ENCODE measurements at regions of chrX and their contacts with region 1.

Region 1: DNA sequence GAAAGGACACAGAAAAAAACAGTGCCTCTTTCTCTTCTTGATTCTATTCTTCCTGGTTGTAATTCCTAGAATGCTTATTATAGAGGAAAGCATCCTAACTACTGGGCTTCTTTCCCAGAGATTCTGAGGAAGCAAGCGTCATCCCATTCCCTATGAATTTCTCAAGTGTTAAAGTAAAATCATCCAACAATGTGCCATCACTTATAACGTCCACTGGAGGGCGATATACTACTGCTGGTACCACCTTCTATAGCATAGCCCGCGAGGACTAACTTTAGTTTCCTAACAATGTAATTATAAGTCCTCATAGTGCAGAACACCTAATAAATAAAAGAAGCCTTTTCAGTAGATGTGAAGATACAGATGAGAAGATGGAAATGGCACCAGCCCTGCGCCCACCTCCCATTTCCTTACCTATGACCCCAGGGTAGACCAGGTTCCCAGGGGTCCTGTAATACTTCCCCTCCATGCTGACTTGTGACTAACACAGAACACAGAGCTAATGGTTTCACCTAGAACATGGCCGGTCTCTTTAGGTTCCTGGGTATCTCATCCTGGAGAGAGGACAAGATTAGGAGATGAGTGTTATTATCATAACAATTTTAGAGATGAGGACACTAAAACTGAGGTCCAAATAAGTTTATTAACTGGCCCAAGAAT is 4.2 kb downstream of the CENPVL3 start:
- DNase-seq: no peak
- ATAC-seq: peak; percentile 66
- H3K4me3 ChIP-seq: no peak overlapping the region
- H3K27ac ChIP-seq: no peak overlapping the region
- H3K4me1 ChIP-seq: no peaks in the 10 kb centered on the region
- H3K27me3 ChIP-seq: no peaks in the 10 kb centered on the region
- CTCF ChIP-seq: peak; percentile 47 to 60 (median 60); a peak in 5 of 6 replicates
- EP300 ChIP-seq: no peak
- POLR2A ChIP-seq: no peak
- RAD21 ChIP-seq: peak; percentile 79

Region 2: DNA sequence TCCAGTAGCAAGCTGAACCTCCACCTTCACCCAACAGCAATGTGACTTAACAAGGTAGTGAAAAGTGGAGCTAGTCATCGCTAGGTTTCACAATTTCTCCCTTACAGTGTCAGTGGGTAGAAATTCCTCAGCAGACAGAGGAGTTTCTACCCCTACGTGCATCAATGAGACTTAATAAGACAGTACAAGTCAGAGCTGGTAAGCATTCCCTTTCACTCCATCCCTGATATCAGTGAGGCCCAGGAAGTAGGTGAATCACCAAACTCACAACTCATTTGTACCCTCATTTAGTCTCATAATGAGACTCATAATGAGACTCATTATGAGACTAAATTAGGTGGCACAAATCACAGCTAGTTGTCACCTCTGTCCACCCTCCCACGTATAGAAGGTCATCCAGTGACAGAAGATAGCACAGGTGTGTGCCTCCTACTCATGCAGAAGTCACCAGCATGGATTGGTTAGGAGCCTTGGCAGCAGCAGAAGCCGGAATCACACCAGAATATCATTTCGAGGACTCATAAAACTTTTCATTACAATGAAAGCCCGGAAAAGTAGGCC is 332.6 kb before region 1 on chrX:
- CTCF ChIA-PET with region 1: no interaction called
- POLR2A ChIA-PET with region 1: no interaction called
- RAD21 ChIA-PET with region 1: no interaction called
- SMC1A ChIA-PET with region 1: no interaction called
- in situ Hi-C with region 1: no loop called
- intact Hi-C with region 1: no loop called
- DNase-seq: no peak
- ATAC-seq: no peak
- H3K4me3 ChIP-seq: no peak overlapping the region
- H3K27ac ChIP-seq: no peak overlapping the region
- H3K4me1 ChIP-seq: no peaks in the 10 kb centered on the region
- H3K27me3 ChIP-seq: no peaks in the 10 kb centered on the region
- CTCF ChIP-seq: no peak
- EP300 ChIP-seq: no peak
- POLR2A ChIP-seq: no peak
- RAD21 ChIP-seq: no peak

Region 3: DNA sequence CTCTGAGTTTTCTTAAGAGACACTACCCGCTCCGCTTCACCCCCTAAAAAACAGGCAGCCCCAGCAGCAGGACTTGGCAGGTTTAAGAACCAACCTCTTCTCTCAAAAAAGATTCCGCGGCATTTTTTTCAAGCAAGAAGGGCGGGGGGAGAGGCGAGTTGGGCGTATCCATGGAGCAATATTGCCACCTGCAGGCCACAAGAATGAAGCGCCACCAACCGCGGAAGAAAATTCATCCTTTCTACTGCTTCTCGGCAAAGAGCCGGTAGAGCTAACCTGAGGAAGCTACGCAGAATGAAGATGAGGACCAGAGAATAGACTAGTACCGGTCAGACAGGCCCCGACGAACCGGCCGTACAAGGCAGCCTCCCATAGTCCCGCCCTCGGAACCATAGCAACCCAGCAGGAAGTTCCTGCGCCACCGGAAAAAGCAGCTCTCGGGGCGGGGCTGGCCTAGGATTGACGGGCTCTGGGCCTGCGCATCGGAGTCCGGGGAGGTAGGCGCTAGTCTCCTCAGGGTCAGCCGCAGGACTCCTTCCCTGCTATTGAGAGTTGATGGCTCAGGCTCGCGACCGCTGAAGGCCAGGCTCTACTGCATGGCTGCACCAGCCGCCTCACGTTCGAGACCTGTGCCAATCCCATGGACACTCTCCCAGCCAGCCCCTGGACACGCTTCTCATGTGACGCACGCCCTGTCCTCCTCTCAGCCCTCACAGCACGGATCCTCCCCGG is 647.1 kb after region 1 on chrX:
- CTCF ChIA-PET with region 1: interaction called, 3 read pairs
- POLR2A ChIA-PET with region 1: no interaction called
- RAD21 ChIA-PET with region 1: interaction called, 4 read pairs
- SMC1A ChIA-PET with region 1: no interaction called
- in situ Hi-C with region 1: loop called (anchors 10 kb)
- intact Hi-C with region 1: loop called (anchors 1 kb)
- DNase-seq: peak; percentile 64
- ATAC-seq: peak; percentile 100
- H3K4me3 ChIP-seq: peak overlapping the region; percentile 68
- H3K27ac ChIP-seq: peak overlapping the region; percentile 79
- H3K4me1 ChIP-seq: no peaks in the 10 kb centered on the region; the same call in none of the 2 replicates
- H3K27me3 ChIP-seq: no peaks in the 10 kb centered on the region
- CTCF ChIP-seq: peak; percentile 80 to 96 (median 93); a peak in 5 of 6 replicates
- EP300 ChIP-seq: peak in 1 of 2 experiments; percentile 32; a peak in 1 of 4 replicates
- POLR2A ChIP-seq: peak; percentile 84
- RAD21 ChIP-seq: peak; percentile 97

Measured in GM12878 (cell line).